Vagina (tissue), 2 donors: ENCODE measurements at regions of chr17 and their contacts with region 1.

Region 1: GRCh38 chr17:79991140-79991923 is 44.3 kb downstream of the TBC1D16 start:
- DNase-seq: no peak
- H3K4me3 ChIP-seq: peak overlapping the region; percentile 36 to 56
- H3K27ac ChIP-seq: peak overlapping the region; percentile 79
- H3K4me1 ChIP-seq: peaks cover 61% of the 10 kb centered on the region
- H3K27me3 ChIP-seq: no peaks in the 10 kb centered on the region
- CTCF ChIP-seq: peak in 1 of 3 experiments; percentile 81
- POLR2A ChIP-seq: no peak

Region 2: DNA sequence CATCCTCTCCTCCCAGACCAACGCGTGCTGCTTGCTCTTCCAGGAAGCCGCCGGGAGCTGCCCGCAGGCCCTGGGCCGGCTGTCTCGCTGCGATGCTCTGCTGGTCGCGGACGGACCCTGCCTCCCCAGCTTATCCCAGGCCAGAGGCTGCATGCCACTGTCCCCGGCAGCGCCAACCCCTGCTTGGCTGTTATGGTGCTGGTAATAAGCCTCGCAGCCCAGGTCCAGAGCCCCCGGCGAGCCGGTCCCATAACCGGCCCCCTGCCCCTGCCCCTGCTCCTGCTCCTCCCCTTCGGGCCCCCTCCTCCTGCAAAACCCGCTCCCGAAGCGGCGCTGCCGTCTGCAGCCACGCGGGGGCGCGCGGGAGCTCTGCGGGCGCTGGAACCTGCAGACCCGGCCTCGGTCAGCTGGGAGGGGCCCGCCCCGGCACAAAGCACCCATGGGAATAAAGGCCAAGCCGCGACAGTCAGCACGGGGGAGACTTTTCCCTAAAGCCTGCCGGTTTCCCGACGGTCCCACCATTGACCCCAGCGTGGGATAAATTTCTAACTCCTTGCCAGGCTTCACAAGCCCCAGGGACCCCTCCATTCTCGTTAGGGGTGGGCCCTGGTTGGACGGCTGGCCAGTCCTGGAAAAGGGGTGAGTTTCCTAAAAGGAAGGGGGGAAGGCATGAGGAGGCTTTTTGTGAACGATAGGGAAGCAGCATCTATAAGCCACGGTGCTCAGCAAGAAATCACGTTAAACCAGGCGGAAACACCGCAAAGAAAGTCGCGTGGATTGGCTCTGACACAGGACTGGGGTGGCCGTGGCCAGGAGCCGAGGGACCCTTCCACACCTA is 249.4 kb before region 1 on chr17:
- intact Hi-C with region 1: loop called (anchors 10 kb)
- DNase-seq: no peak
- H3K4me3 ChIP-seq: peak overlapping the region in 1 of 2 donors; percentile 12
- H3K27ac ChIP-seq: no peak overlapping the region
- H3K4me1 ChIP-seq: peaks cover 13% of the 10 kb centered on the region
- H3K27me3 ChIP-seq: no peaks in the 10 kb centered on the region
- CTCF ChIP-seq: peak; percentile 60 to 85 (median 83)
- POLR2A ChIP-seq: no peak

Region 3: GRCh38 chr17:79796763-79797491 is 194.4 kb before region 1 on chr17 and contains the start of gene CBX8:
- intact Hi-C with region 1: loop called (anchors 10 kb)
- DNase-seq: peak; percentile 98
- H3K4me3 ChIP-seq: peak within 1 kb of the TSS; percentile 62 to 63
- H3K27ac ChIP-seq: peak within 1 kb of the TSS; percentile 75
- H3K4me1 ChIP-seq: peaks cover 68% of the 10 kb centered on the region
- H3K27me3 ChIP-seq: peaks cover 34% of the 10 kb centered on the region
- CTCF ChIP-seq: peak in 1 of 3 experiments; percentile 19
- POLR2A ChIP-seq: no peak
- total RNA-seq, gene CBX8: 0.98 TPM

Region 4: GRCh38 chr17:79839363-79840268 is 151.7 kb before region 1 on chr17 and contains the start of gene CBX4:
- intact Hi-C with region 1: loop called (anchors 10 kb)
- DNase-seq: peak in 1 of 2 donors; percentile 95
- H3K4me3 ChIP-seq: peak within 1 kb of the TSS; percentile 72 to 75
- H3K27ac ChIP-seq: peak within 1 kb of the TSS; percentile 93
- H3K4me1 ChIP-seq: peaks cover 76% of the 10 kb centered on the region
- H3K27me3 ChIP-seq: peaks cover 12% of the 10 kb centered on the region
- CTCF ChIP-seq: peak in 2 of 3 experiments; percentile 39 to 42
- POLR2A ChIP-seq: peak in 1 of 2 donors; percentile 77
- total RNA-seq, gene CBX4: 13.0 TPM